ENCODE measurements at regions of chr3 and their contacts with region 1.

Region 1: GRCh38 chr3:30347679-30348216 is 258.7 kb upstream of the TGFBR2 start:
- DNase-seq: peak; percentile 58
- H3K4me3 Mint-ChIP-seq: no peak overlapping the region
- H3K27ac Mint-ChIP-seq: peak overlapping the region; percentile 83
- H3K4me1 Mint-ChIP-seq: peaks cover 69% of the 10 kb centered on the region
- H3K27me3 Mint-ChIP-seq: peaks cover 8% of the 10 kb centered on the region

Region 2: GRCh38 chr3:30319713-30320112 is 28.0 kb before region 1 on chr3:
- CTCF ChIA-PET with region 1: interaction called, 10 read pairs
- DNase-seq: peak; percentile 40
- H3K4me3 Mint-ChIP-seq: no peak overlapping the region
- H3K27ac Mint-ChIP-seq: no peak overlapping the region
- H3K4me1 Mint-ChIP-seq: peaks cover 4% of the 10 kb centered on the region
- H3K27me3 Mint-ChIP-seq: no peaks in the 10 kb centered on the region

Region 3: GRCh38 chr3:30426293-30426993 is 78.7 kb after region 1 on chr3:
- CTCF ChIA-PET with region 1: no interaction called
- DNase-seq: no peak
- H3K4me3 Mint-ChIP-seq: no peak overlapping the region
- H3K27ac Mint-ChIP-seq: no peak overlapping the region
- H3K4me1 Mint-ChIP-seq: no peaks in the 10 kb centered on the region
- H3K27me3 Mint-ChIP-seq: no peaks in the 10 kb centered on the region